Posterior vena cava (tissue), 2 donors: ENCODE measurements at regions of chr2 and their contacts with region 1.

Region 1: DNA sequence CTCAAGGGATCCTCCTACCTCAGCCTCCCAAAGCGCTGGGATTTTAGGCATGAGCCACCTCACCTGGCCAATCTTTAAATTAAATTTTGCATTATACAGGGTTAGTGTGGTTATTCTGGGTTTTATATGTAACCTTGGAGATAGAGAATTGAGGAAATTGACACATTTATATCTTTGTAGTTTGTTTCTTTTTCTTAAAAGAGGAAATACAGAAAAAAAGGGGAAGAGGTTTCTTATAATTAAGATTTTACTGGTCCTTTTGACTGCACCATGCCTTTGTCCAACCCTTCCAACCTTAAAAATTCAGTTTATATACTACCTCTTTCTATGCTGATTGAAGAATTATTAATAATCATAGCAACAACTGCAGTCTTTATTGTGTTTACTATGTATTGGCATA is 210.1 kb upstream of the STON1 start:
- DNase-seq: no peak

Region 2: DNA sequence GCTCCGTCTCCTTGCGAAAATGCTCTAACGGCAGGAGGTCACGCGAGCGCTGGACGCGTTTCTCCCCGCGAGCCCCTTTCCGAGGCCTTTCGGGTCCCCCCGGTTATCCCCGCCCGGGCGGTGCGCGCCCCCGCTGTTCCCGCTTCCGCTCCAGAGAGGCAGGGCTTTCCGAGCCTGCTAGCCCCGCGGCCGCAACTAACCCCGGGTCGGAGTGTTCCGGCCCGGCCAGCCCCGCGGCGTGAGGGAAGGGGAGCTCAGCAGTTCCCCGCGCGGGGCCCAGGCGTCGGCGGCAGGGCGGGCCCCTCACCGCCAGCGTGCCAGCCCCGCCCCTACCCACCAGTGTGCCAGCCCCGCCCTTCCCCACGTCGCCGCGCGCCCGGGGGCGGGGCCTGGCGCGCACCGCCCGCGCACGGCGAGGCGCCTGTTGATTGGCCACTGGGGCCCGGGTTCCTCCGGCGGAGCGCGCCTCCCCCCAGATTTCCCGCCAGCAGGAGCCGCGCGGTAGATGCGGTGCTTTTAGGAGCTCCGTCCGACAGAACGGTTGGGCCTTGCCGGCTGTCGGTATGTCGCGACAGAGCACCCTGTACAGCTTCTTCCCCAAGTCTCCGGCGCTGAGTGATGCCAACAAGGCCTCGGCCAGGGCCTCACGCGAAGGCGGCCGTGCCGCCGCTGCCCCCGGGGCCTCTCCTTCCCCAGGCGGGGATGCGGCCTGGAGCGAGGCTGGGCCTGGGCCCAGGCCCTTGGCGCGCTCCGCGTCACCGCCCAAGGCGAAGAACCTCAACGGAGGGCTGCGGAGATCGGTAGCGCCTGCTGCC is 537.0 kb before region 1 on chr2 and contains the start of gene MSH6:
- intact Hi-C with region 1: loop called in 1 of 2 experiments (anchors 5 kb)
- DNase-seq: peak; percentile 96
- total RNA-seq, gene MSH6: 30.8 to 36.3 TPM

Region 3: DNA sequence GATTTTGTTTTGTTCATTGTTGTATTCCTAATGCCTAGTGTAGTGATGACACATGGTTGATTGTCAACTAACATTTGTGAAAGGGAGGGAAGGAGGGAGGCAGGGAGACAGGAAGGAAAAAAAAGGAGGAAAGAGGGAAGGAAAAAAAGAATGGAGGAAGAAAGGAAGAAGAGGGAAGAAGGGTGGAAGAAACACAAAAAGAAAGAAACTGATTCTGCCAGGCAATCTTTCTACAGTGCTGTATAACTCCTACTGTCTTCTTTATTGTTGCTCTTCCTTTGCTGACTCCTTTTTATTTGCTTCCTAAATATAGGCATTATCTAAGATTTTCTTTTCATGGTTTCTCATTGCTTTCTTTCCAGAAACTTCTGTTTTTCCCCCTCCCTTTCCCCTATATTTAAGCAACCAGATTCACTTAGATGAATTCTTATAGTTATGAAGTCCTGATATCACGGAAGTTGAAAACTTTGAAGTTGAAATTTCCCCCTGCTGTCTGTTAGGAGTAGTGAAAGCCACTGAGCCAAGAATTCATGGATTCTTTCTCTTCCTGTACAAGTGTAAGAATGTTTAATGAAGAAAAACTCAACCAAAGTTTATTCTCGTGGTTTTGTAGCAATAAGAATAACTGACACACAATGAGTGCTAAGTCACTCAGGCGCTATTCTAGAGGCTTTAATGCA is 1139.6 kb after region 1 on chr2:
- intact Hi-C with region 1: no loop called
- DNase-seq: no peak